ENCODE measurements at regions of chr6 and their contacts with region 1.

Region 1: DNA sequence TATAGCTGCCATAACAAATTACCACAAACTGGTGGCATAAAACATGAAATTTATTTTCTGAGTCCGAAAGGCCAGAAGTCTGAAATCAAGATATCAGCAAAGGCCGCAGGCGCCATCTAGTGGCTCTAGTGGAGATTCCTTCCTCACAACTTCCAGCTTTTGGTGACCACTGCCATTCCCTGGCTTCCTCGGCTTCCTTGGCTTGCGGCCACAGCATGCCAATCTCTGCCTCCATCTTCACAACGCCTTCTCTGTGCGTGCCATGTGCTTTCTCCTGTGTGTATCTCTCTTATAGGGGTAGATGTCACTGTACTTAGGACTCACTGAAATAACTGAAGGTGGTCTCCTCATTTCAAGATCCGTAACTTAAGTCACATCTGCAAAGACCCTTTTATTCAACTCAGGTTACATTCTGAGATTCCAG is 5.4 kb upstream of the PLAGL1 start:
- DNase-seq: peak; percentile 68 to 77
- H3K4me3 ChIP-seq: no peak overlapping the region
- H3K27ac ChIP-seq: no peak overlapping the region
- H3K4me1 ChIP-seq: no peaks in the 10 kb centered on the region
- H3K27me3 ChIP-seq: no peaks in the 10 kb centered on the region
- CTCF ChIP-seq: peak; percentile 85 to 91 (median 89)
- POLR2A ChIP-seq: no peak

Region 2: DNA sequence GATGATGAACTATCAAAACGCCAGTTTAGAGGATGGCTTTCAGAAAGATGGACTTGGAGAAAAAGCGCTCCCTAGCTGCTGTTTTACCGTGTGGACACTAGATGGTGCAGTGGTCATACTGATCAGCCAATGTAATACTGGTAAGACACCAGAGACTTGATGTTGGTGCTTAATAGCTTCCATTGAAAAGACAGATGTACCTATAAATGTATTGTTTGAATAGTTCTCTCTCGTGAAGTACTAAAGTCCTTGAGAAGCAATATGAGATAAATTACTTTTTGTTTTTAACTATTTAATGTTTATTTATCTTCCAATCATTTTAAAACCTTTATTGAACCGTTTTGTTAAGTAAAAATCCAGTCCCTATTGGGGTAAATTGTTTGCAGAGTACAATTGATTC is 438.1 kb before region 1 on chr6:
- intact Hi-C with region 1: loop called (anchors 2 kb)
- DNase-seq: peak; percentile 38 to 56
- H3K4me3 ChIP-seq: no peak overlapping the region
- H3K27ac ChIP-seq: no peak overlapping the region
- H3K4me1 ChIP-seq: no peaks in the 10 kb centered on the region
- H3K27me3 ChIP-seq: no peaks in the 10 kb centered on the region
- CTCF ChIP-seq: peak; percentile 83 to 93 (median 90)
- POLR2A ChIP-seq: no peak

Region 3: DNA sequence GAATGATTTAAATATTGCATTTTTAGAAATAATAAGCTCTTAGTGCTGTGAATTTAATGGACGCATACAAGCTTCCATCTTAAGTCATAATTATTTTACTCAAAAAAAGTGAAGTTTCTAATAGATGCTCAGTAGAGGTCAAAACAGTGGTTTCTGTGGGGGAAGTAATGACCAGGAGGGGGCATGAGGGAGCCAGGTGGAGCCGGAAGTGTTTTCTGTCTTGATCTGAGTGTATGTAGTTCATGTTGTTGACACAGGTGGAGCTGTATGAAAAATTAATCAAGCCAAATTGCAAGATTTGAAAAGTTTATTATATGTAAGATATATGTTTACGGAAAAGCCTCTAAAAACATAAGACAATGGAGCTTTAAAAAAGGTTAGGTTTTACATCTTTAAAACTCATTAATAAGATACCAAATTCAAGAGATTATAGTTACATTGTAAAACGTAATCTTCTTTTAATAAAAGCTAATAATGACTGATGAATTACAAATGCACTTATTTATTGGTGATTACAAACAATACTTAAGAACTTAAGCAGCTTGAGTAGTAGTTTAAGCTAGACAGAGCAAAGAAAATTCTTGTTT is 73.4 kb before region 1 on chr6:
- intact Hi-C with region 1: loop called (anchors 5 kb)
- DNase-seq: peak in 1 of 2 donors; percentile 22
- H3K4me3 ChIP-seq: no peak overlapping the region
- H3K27ac ChIP-seq: no peak overlapping the region
- H3K4me1 ChIP-seq: no peaks in the 10 kb centered on the region
- H3K27me3 ChIP-seq: no peaks in the 10 kb centered on the region
- CTCF ChIP-seq: peak; percentile 32 to 56 (median 40)
- POLR2A ChIP-seq: no peak

Region 4: GRCh38 chr6:144265390-144265789 is 251.9 kb after region 1 on chr6:
- intact Hi-C with region 1: no loop called
- DNase-seq: no peak
- H3K4me3 ChIP-seq: no peak overlapping the region
- H3K27ac ChIP-seq: peak overlapping the region; percentile 58 to 66
- H3K4me1 ChIP-seq: peaks cover 0 to 11% of the 10 kb centered on the region in 2 donors
- H3K27me3 ChIP-seq: no peaks in the 10 kb centered on the region
- CTCF ChIP-seq: no peak
- POLR2A ChIP-seq: no peak